MCF 10A (cell line): ENCODE measurements at regions of chr16 and their contacts with region 1.

Region 1: DNA sequence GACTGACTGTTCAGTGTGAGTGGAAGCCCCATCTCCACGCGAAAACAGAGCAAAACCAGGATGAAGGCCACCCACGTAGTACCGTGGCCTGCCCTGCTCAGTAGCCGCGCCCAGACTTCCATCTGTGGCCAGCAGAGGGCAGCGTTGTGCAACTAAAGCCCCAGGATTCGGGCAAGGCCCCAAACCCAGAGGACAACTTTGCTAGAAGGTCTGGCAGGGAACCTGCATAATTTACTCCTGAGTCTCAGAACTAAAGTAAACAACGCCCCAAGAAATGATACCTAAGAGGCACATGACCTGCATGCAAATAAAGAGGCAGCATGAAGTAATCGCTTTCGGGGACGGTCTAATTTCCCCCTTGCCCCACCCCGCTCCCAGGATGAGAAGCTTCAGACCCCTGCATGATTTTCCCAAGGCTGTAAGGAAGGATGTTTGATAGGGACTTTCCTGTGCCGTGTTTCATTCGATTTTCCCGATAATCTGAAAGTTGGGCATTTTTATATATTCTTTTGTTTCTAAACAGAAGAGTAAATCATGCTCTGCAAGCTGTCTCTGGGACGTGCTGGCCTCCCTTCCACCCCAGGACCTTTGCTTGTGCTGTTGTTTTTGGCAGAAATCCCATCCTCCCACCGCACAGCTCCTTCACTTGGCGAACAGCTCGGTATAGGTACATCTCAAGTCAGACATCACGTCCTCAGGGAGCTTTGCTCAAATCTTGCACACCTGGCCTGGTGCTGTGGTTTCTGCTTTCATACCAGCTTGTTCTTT is 18.6 kb downstream of the HSBP1 start:
- DNase-seq: peak; percentile 84
- H3K4me3 Mint-ChIP-seq: no peak overlapping the region
- H3K27ac Mint-ChIP-seq: no peak overlapping the region
- H3K4me1 Mint-ChIP-seq: peaks cover 8% of the 10 kb centered on the region
- H3K27me3 Mint-ChIP-seq: no peaks in the 10 kb centered on the region
- CTCF ChIP-seq: peak; percentile 87

Region 2: GRCh38 chr16:83458612-83459011 is 367.7 kb before region 1 on chr16:
- CTCF ChIA-PET with region 1: no interaction called
- POLR2A ChIA-PET with region 1: no interaction called
- intact Hi-C with region 1: loop called (anchors 10 kb)
- DNase-seq: peak; percentile 81
- H3K4me3 Mint-ChIP-seq: no peak overlapping the region
- H3K27ac Mint-ChIP-seq: peak overlapping the region; percentile 88
- H3K4me1 Mint-ChIP-seq: peaks cover 17% of the 10 kb centered on the region
- H3K27me3 Mint-ChIP-seq: no peaks in the 10 kb centered on the region
- CTCF ChIP-seq: no peak

Region 3: GRCh38 chr16:83813823-83814658 is 12.3 kb before region 1 on chr16:
- CTCF ChIA-PET with region 1: interaction called, 10 read pairs
- POLR2A ChIA-PET with region 1: interaction called, 6 read pairs
- intact Hi-C with region 1: no loop called
- DNase-seq: peak; percentile 20
- H3K4me3 Mint-ChIP-seq: no peak overlapping the region
- H3K27ac Mint-ChIP-seq: no peak overlapping the region
- H3K4me1 Mint-ChIP-seq: no peaks in the 10 kb centered on the region
- H3K27me3 Mint-ChIP-seq: no peaks in the 10 kb centered on the region
- CTCF ChIP-seq: no peak

Region 4: GRCh38 chr16:83878838-83879237 is 52.5 kb after region 1 on chr16:
- CTCF ChIA-PET with region 1: interaction called, 14 read pairs
- POLR2A ChIA-PET with region 1: interaction called, 3 read pairs
- intact Hi-C with region 1: loop called (anchors 1 kb)
- DNase-seq: peak; percentile 45
- H3K4me3 Mint-ChIP-seq: no peak overlapping the region
- H3K27ac Mint-ChIP-seq: no peak overlapping the region
- H3K4me1 Mint-ChIP-seq: no peaks in the 10 kb centered on the region
- H3K27me3 Mint-ChIP-seq: peaks cover 50% of the 10 kb centered on the region
- CTCF ChIP-seq: peak; percentile 53

Region 5: GRCh38 chr16:83913245-83913633 is 86.9 kb after region 1 on chr16:
- CTCF ChIA-PET with region 1: no interaction called
- POLR2A ChIA-PET with region 1: no interaction called
- intact Hi-C with region 1: no loop called
- DNase-seq: no peak
- H3K4me3 Mint-ChIP-seq: no peak overlapping the region
- H3K27ac Mint-ChIP-seq: no peak overlapping the region
- H3K4me1 Mint-ChIP-seq: no peaks in the 10 kb centered on the region
- H3K27me3 Mint-ChIP-seq: no peaks in the 10 kb centered on the region
- CTCF ChIP-seq: no peak

Region 6: DNA sequence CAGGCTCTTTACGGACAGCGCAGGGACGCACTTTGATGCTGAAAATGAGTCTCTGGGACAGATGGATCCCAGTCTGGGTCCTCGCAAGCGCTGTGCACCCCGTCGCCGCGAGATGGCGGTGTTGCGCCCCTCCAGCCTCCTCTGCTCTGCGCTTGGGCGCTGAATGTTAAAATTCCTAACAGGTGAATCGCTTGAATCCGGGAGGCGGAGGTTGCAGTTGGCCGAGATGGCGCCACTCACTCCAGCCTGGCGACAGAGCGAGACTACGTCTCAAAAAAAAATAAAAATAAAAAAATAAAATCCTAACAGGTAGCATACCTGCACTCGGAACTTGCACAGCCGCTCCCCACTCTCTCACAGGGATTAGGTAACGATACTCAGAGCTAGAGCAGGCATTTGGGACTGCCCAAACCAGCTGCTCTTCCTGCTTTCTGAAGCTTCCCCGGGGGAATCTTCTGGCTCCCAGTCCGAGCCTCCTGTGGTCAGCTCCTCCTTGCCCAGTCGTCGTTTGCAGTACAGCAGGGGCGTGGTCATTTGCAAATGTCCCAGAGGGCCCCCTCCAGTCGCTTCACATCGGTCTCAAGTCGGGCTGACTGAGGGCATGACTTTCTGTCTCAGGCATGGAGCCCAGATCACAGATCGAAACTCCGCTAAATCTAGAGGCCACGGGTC is 100.5 kb after region 1 on chr16:
- CTCF ChIA-PET with region 1: interaction called, 9 read pairs
- POLR2A ChIA-PET with region 1: interaction called, 3 read pairs
- intact Hi-C with region 1: loop called (anchors 1 kb)
- DNase-seq: peak; percentile 86
- H3K4me3 Mint-ChIP-seq: peak overlapping the region; percentile 62
- H3K27ac Mint-ChIP-seq: no peak overlapping the region
- H3K4me1 Mint-ChIP-seq: peaks cover 5% of the 10 kb centered on the region
- H3K27me3 Mint-ChIP-seq: no peaks in the 10 kb centered on the region
- CTCF ChIP-seq: peak; percentile 86

Region 7: GRCh38 chr16:83963277-83964119 is 137.2 kb after region 1 on chr16:
- CTCF ChIA-PET with region 1: no interaction called
- POLR2A ChIA-PET with region 1: no interaction called
- intact Hi-C with region 1: no loop called
- DNase-seq: no peak
- H3K4me3 Mint-ChIP-seq: no peak overlapping the region
- H3K27ac Mint-ChIP-seq: no peak overlapping the region
- H3K4me1 Mint-ChIP-seq: peaks cover 6% of the 10 kb centered on the region
- H3K27me3 Mint-ChIP-seq: peaks cover 10% of the 10 kb centered on the region
- CTCF ChIP-seq: no peak

Region 8: GRCh38 chr16:84504420-84505248 is 678.3 kb after region 1 on chr16 and contains the start of gene MEAK7:
- CTCF ChIA-PET with region 1: no interaction called
- POLR2A ChIA-PET with region 1: no interaction called
- intact Hi-C with region 1: loop called (anchors 10 kb)
- DNase-seq: peak; percentile 99
- H3K4me3 Mint-ChIP-seq: peak within 1 kb of the TSS; percentile 84
- H3K27ac Mint-ChIP-seq: peak within 1 kb of the TSS; percentile 88
- H3K4me1 Mint-ChIP-seq: peaks cover 52% of the 10 kb centered on the region
- H3K27me3 Mint-ChIP-seq: no peaks in the 10 kb centered on the region
- CTCF ChIP-seq: no peak
- total RNA-seq, gene MEAK7: 62.3 and 66.8 TPM in 2 replicates